ENCODE measurements at regions of chr19 and their contacts with region 1.

Region 1: DNA sequence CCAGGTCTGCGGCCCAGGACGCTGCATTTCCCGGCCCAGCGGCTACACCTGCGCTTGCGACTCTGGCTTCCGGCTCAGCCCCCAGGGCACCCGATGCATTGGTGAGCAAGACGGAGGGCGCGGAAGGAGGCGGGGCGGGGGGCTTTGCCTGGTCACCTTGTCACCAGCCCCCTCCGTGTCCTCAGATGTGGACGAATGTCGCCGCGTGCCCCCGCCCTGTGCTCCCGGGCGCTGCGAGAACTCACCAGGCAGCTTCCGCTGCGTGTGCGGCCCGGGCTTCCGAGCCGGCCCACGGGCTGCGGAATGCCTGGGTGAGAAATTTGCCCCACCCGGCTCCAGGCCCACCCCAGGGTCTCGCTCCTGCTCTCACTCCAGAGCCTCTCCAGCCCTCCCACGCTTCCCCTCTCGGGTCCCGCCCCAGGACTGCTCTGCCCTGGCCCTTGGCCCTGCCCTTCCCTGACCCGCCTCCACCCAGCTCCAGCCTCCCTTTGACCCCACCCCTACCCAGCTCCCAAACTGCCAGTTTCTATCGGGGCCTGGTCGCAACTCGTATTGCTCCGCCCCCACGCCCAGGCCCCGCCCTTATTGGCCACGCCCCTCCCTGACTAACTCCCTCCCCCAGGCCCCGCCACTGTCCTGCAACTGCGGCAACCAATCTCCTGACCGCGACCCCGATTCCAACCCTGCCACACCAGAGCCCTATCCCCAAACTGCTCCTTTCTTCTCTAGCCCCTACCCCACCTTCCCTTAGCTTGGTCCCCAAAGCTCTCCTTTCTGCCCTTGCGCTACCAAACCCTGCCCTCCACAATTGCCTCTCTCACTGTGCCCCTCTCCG is 8.6 kb downstream of the LTBP4 start:
- DNase-seq: peak; percentile 97
- H3K4me3 Mint-ChIP-seq: peak overlapping the region; percentile 89
- H3K27ac Mint-ChIP-seq: peak overlapping the region; percentile 91
- H3K4me1 Mint-ChIP-seq: peaks cover 67% of the 10 kb centered on the region
- H3K27me3 Mint-ChIP-seq: no peaks in the 10 kb centered on the region

Region 2: GRCh38 chr19:39397360-39398296 is 1212.2 kb before region 1 on chr19:
- CTCF ChIA-PET with region 1: no interaction called
- intact Hi-C with region 1: loop called (anchors 10 kb)
- DNase-seq: peak; percentile 96
- H3K4me3 Mint-ChIP-seq: peak overlapping the region; percentile 34
- H3K27ac Mint-ChIP-seq: peak overlapping the region; percentile 91
- H3K4me1 Mint-ChIP-seq: peaks cover 63% of the 10 kb centered on the region
- H3K27me3 Mint-ChIP-seq: no peaks in the 10 kb centered on the region

Region 3: GRCh38 chr19:39951686-39952085 is 658.1 kb before region 1 on chr19:
- CTCF ChIA-PET with region 1: no interaction called
- intact Hi-C with region 1: loop called (anchors 10 kb)
- DNase-seq: peak; percentile 42
- H3K4me3 Mint-ChIP-seq: peak overlapping the region; percentile 1
- H3K27ac Mint-ChIP-seq: peak overlapping the region; percentile 93
- H3K4me1 Mint-ChIP-seq: peaks cover 84% of the 10 kb centered on the region
- H3K27me3 Mint-ChIP-seq: no peaks in the 10 kb centered on the region

Region 4: DNA sequence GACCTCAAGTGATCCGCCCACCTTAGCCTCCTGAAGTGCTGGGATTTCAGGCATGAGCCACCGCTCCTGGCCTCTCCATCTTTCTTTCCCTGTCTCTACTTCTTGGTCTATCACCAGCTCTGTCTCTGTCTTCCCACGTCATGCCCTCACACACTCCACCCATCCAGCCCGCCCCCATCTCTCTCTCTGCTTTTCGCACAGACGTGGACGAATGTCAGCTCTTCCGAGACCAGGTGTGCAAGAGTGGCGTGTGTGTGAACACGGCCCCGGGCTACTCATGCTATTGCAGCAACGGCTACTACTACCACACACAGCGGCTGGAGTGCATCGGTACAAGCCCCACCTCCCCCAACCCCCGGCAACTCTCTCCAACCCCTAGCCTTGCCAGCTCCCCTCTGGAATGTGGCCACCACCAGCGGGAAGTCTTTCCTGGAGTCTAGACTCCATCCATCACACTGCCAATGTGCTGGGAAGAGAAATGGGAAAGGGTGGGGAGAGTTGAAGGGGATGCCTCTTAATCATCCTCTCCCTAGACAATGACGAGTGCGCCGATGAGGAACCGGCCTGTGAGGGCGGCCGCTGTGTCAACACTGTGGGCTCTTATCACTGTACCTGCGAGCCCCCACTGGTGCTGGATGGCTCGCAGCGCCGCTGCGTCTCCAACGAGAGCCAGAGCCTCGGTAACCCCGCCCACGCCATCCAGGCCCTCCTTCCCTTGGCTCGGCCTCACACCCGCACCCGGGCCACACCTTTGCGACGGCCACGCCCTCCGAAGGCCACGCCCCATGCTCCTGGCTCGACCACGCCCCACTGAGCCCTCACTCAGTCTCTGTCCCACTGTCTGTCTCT is 13.8 kb after region 1 on chr19:
- CTCF ChIA-PET with region 1: no interaction called
- intact Hi-C with region 1: no loop called
- DNase-seq: no peak
- H3K4me3 Mint-ChIP-seq: no peak overlapping the region
- H3K27ac Mint-ChIP-seq: no peak overlapping the region
- H3K4me1 Mint-ChIP-seq: peaks cover 18% of the 10 kb centered on the region
- H3K27me3 Mint-ChIP-seq: no peaks in the 10 kb centered on the region

Region 5: DNA sequence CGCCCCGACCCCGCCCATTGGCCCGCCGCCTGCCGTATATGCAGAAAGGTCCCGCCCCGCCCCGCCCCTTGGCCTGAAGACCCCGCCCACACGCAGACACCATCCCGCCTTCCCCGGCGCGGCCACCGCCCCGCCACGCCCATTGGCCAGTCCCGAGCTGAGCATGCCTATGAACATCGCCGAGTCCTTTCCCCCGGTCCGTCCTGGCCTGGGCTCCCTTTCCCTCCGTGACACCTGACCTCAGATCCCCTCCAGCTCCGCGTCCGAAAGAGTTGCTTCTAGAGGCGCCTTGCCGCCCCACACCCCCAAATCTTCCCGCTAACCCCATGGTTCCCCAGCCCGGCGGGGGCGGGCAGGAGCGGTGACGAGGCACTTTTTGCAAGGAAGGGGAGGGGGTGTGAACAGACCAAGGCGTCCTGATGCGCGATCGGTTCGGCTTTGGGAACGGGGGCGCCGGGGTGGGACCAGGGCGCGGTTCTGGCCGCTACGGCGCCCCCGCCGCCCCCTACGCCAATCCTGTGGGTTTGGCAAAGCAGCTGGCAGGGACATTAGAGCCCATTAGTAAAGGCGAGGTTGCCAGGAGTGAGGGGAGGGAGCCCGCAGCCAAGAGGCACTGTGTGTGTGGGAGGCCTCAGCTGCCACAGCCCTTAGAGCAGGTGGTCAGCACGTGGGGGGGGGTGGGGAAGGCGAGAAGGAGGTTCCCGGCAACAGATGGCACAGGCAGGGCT is 81.1 kb after region 1 on chr19:
- CTCF ChIA-PET with region 1: no interaction called
- intact Hi-C with region 1: loop called (anchors 2 kb)
- DNase-seq: peak; percentile 93
- H3K4me3 Mint-ChIP-seq: peak overlapping the region; percentile 87
- H3K27ac Mint-ChIP-seq: peak overlapping the region; percentile 95
- H3K4me1 Mint-ChIP-seq: peaks cover 7% of the 10 kb centered on the region
- H3K27me3 Mint-ChIP-seq: no peaks in the 10 kb centered on the region

Region 6: GRCh38 chr19:40798223-40798996 is 188.6 kb after region 1 on chr19:
- CTCF ChIA-PET with region 1: no interaction called
- intact Hi-C with region 1: loop called (anchors 2 kb)
- DNase-seq: peak; percentile 100
- H3K4me3 Mint-ChIP-seq: peak overlapping the region; percentile 92
- H3K27ac Mint-ChIP-seq: peak overlapping the region; percentile 97
- H3K4me1 Mint-ChIP-seq: peaks cover 49% of the 10 kb centered on the region
- H3K27me3 Mint-ChIP-seq: no peaks in the 10 kb centered on the region